B cell (primary cell): ENCODE measurements at regions of chr4 and their contacts with region 1.

Region 1: DNA sequence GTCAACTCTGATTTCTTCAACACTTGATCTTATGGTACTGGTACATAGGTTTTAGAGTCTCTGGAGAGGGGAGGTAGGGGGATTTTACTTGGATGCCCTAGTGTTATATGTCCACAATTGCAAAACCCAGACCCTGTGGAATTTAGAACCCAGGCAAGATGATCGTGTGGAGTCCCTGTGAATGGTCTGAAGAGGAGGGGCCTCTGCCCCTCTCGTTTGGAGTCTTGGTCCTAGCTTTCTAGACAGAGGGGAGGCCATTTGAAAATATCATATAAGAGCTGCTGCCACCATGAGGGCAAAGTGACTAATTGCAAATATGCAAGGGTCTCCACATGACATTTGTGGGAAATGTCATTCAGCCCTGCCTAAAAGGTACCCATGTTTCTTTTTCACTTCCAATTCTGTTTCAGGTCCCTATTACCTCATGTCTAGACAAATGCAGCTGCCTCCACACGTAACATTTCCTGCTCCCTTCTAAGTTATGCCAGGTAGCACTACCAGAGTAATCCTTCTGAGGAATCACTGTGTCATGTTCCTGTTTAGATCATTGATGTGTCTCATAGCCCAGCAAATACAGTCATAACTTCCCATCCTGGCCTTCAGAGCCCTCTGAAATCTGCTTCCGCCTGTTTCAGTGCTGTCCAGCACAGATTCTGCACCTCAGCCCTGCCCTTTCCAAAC is 126.8 kb downstream of the KLHL8 start:
- DNase-seq: peak; percentile 75
- ATAC-seq: peak; percentile 84
- H3K4me3 ChIP-seq: no peak overlapping the region
- H3K4me3 Mint-ChIP-seq: no peak overlapping the region
- H3K27ac ChIP-seq: peak overlapping the region in 1 of 2 donors; percentile 32
- H3K27ac Mint-ChIP-seq: peak overlapping the region; percentile 77
- H3K4me1 ChIP-seq: peaks cover 10 to 14% of the 10 kb centered on the region in 2 donors
- H3K4me1 Mint-ChIP-seq: peaks cover 21% of the 10 kb centered on the region
- H3K27me3 ChIP-seq: no peaks in the 10 kb centered on the region
- H3K27me3 Mint-ChIP-seq: no peaks in the 10 kb centered on the region
- CTCF ChIP-seq: peak; percentile 80

Region 2: DNA sequence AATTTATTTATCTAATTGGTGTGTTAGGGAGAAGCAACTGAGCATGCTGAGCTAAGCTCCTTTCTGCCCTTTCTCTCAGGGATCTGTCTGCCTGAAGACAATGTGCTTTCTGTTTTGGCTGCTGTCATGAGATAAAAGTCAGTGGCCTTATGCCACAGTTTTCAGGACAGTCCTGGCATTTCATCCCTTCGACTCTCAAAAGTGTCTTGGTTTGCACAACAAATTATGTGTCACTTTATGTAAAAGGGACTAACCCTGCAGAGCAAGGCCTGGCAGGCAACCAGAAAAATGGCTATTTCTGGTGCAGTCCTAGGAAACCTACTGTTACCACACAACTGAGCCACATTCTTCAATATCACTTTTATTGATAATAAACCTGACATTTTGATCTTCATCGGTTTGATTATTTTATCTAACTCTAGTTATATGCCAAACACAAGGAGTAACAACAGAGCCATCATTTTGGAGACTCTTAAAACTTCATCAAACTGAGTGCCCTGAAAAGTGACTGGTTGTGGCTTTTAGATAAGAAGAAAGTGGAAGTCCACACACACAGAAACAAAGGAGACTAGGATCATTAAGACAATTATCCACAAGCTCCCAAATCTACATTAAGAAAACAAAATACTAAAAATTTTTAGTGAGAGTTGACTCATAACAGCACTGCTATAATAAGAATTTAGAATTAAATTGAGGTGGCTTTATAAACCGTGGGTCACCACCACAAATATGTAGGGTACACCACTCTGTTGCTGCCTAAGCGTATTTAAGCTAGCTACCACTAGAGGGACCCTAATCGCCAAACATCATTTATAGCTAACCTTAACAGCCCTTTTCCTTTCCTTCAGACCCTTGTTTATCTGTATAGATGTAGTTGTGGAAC is 595.4 kb before region 1 on chr4:
- CTCF ChIA-PET with region 1: interaction called, 10 read pairs
- POLR2A ChIA-PET with region 1: no interaction called
- intact Hi-C with region 1: loop called (anchors 2 kb)
- DNase-seq: peak; percentile 44
- ATAC-seq: peak; percentile 67
- H3K4me3 ChIP-seq: no peak overlapping the region
- H3K4me3 Mint-ChIP-seq: no peak overlapping the region
- H3K27ac ChIP-seq: no peak overlapping the region
- H3K27ac Mint-ChIP-seq: no peak overlapping the region
- H3K4me1 ChIP-seq: no peaks in the 10 kb centered on the region
- H3K4me1 Mint-ChIP-seq: no peaks in the 10 kb centered on the region
- H3K27me3 ChIP-seq: no peaks in the 10 kb centered on the region
- H3K27me3 Mint-ChIP-seq: peaks cover 17% of the 10 kb centered on the region
- CTCF ChIP-seq: peak; percentile 86

Region 3: DNA sequence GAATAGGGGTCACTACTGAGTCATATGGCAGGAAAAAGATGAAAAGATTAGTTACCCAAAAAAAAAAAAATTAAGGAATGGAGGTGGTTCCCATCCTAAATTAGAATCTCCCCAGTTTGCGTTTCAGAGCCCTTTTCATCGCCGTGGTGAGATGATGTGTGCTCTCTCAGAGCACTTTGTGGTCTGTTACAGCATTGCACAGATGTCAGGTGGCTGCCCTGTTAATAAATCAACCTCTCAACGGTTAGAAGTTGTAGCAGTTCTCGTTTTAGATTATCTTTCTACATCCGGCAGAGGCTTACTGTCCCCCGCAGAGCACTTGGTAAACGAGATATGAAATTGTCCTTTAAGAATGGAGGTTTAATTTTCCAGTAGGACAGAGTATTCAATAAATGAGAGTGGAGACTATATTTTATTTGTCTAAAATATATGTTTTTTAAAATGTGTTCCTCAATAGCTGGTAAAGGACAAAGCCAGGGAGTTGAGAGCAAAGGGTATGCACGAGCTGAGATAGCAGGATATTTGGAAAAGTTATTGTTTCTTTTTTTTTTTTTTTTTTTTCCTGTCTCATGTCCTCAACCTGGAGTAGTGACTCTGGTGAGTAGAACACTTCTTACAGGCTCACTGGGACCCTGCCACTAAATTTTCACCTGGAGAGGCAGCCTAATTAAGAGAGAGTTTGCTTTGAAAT is 131.8 kb before region 1 on chr4:
- CTCF ChIA-PET with region 1: interaction called, 13 read pairs
- POLR2A ChIA-PET with region 1: no interaction called
- intact Hi-C with region 1: no loop called
- DNase-seq: peak; percentile 72
- ATAC-seq: peak; percentile 89
- H3K4me3 ChIP-seq: peak overlapping the region in 2 of 5 experiments; percentile 5 to 20
- H3K4me3 Mint-ChIP-seq: peak overlapping the region; percentile 52
- H3K27ac ChIP-seq: peak overlapping the region; percentile 54 to 73
- H3K27ac Mint-ChIP-seq: peak overlapping the region; percentile 22
- H3K4me1 ChIP-seq: peaks cover 59 to 65% of the 10 kb centered on the region in 2 donors
- H3K4me1 Mint-ChIP-seq: peaks cover 48% of the 10 kb centered on the region
- H3K27me3 ChIP-seq: no peaks in the 10 kb centered on the region
- H3K27me3 Mint-ChIP-seq: no peaks in the 10 kb centered on the region
- CTCF ChIP-seq: no peak

Region 4: GRCh38 chr4:87073199-87074120 is 20.1 kb before region 1 on chr4:
- CTCF ChIA-PET with region 1: interaction called, 20 read pairs
- POLR2A ChIA-PET with region 1: interaction called, 4 read pairs
- intact Hi-C with region 1: no loop called
- DNase-seq: peak; percentile 79
- ATAC-seq: peak; percentile 86
- H3K4me3 ChIP-seq: peak overlapping the region; percentile 23 to 64 (median 45)
- H3K4me3 Mint-ChIP-seq: peak overlapping the region; percentile 84
- H3K27ac ChIP-seq: peak overlapping the region; percentile 65 to 83
- H3K27ac Mint-ChIP-seq: peak overlapping the region; percentile 76
- H3K4me1 ChIP-seq: peaks cover 10 to 22% of the 10 kb centered on the region in 2 donors
- H3K4me1 Mint-ChIP-seq: peaks cover 37% of the 10 kb centered on the region
- H3K27me3 ChIP-seq: no peaks in the 10 kb centered on the region
- H3K27me3 Mint-ChIP-seq: no peaks in the 10 kb centered on the region
- CTCF ChIP-seq: no peak

Region 5: DNA sequence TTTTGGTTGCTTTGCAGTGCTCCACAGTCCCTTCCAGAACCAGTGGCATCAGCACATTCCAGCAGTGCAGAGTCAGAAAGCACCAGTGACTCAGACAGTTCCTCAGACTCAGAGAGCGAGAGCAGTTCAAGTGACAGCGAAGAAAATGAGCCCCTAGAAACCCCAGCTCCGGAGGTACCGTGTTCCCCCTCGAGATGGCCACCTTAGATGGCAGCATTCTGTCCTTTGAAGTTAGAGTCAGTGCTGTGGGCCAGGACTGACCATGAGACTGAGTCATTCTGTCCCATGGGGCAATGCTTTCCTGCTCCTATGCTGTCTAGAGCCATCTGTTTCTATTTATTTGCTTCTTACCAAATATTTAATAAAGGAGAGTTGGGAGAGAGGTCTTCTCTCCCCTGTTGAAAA is 14.6 kb after region 1 on chr4:
- CTCF ChIA-PET with region 1: interaction called, 15 read pairs
- POLR2A ChIA-PET with region 1: no interaction called
- intact Hi-C with region 1: no loop called
- DNase-seq: no peak
- ATAC-seq: no peak
- H3K4me3 ChIP-seq: no peak overlapping the region
- H3K4me3 Mint-ChIP-seq: no peak overlapping the region
- H3K27ac ChIP-seq: no peak overlapping the region
- H3K27ac Mint-ChIP-seq: no peak overlapping the region
- H3K4me1 ChIP-seq: no peaks in the 10 kb centered on the region
- H3K4me1 Mint-ChIP-seq: peaks cover 4% of the 10 kb centered on the region
- H3K27me3 ChIP-seq: no peaks in the 10 kb centered on the region
- H3K27me3 Mint-ChIP-seq: no peaks in the 10 kb centered on the region
- CTCF ChIP-seq: no peak